ENCODE measurements at regions of chr9 and their contacts with region 1.

Region 1: GRCh38 chr9:38088006-38088925 is 19.2 kb upstream of the SHB start:
- DNase-seq: peak; percentile 84
- H3K4me3 ChIP-seq: no peak overlapping the region
- H3K27ac ChIP-seq: peak overlapping the region in 1 of 2 experiments; percentile 7; a peak in 1 of 4 replicates
- H3K4me1 ChIP-seq: peaks cover 0 to 11% of the 10 kb centered on the region in 2 experiments; a peak in 1 of 4 replicates
- H3K27me3 ChIP-seq: no peaks in the 10 kb centered on the region
- CTCF ChIP-seq: peak; percentile 95
- EP300 ChIP-seq: no peak
- RAD21 ChIP-seq: peak; percentile 84

Region 2: DNA sequence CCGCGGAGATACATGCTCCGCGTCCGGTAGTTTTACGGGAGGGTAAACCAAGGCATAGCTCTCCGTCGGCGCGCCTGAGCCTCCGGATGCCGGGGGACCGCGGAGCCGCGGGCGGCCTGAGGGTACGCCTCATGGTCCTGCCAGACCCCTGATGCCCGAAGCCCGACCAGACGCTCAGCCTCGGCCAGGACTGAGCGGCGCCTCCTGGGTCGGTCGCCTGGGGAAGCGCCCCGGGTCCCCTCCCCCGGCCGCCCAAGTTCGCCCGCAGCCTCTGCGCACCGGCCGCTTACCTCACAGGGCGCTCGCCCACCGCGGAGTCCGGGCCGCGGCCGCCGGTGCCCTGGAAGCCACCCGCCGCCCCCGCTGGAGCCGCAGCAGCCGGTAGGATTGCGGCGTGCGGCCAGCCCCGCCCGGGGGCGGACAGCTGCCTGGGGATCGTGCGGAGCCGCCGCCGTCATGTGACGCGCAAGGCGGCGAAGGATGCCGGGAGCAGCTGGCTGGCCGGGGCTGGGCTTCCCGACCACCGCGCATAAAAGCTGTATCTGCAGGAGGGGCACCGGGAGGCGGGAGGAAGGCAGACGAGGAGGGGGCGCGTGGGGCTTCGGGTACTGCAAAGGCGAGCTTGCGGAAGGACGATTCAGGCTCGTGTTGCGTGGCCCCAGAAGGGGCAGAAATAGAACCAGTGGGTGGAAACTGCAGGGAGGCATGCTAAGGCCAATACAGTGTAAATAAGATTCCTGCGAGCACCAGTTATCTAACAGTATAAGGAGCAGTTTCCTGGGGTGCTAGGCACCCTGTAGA is 512.1 kb before region 1 on chr9 and contains the start of gene FBXO10:
- CTCF ChIA-PET with region 1: no interaction called
- POLR2A ChIA-PET with region 1: no interaction called
- DNase-seq: peak; percentile 91
- H3K4me3 ChIP-seq: peak within 1 kb of the TSS; percentile 72 to 83
- H3K27ac ChIP-seq: peak within 1 kb of the TSS; percentile 28 to 87; a peak in 3 of 4 replicates
- H3K4me1 ChIP-seq: peaks cover 12 to 15% of the 10 kb centered on the region in 2 experiments; a peak in 3 of 4 replicates
- H3K27me3 ChIP-seq: no peaks in the 10 kb centered on the region
- CTCF ChIP-seq: no peak
- EP300 ChIP-seq: no peak
- RAD21 ChIP-seq: no peak
- polyA plus RNA-seq, gene FBXO10: 10.1 and 12.8 TPM in 2 replicates

Region 3: DNA sequence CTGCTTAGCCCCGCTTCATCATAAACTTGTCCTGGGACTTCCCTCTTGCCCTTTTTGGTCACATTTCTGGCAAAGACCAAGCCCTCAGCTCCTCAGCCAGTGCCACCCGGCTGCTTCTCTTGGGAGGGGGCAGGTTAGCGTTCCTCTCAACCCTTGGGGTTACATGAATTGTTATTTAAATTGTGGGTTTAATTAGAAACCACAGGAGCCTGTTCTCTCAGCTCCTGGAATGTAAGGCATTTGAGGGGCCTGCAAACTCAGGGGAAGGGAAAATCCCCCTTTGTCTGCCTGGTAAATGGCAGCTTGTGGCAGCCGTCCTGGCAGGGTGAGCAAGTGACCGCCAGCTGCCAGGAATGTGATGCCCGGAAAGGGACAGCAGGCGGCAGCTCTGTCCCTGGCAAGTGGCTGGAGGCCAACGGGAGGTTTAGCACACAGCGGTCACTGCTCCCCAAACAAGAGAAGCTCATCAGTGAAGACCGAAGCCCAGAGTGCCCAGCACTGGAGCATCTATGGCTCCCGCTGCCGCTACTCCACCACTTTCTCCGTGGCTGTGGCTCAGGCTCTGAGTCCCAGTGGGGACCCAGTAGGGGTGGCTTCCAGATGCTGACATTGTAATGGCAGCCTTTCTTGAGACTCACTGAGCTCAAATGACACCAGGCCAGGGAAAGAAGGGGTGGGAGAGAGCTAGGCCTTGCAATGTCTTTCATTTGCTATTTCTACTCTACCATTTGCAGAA is 70.9 kb before region 1 on chr9:
- CTCF ChIA-PET with region 1: interaction called, 20 read pairs
- POLR2A ChIA-PET with region 1: no interaction called
- DNase-seq: peak; percentile 80
- H3K4me3 ChIP-seq: no peak overlapping the region
- H3K27ac ChIP-seq: peak overlapping the region; percentile 97 to 99
- H3K4me1 ChIP-seq: peaks cover 53 to 61% of the 10 kb centered on the region in 2 experiments
- H3K27me3 ChIP-seq: no peaks in the 10 kb centered on the region
- CTCF ChIP-seq: peak; percentile 45
- EP300 ChIP-seq: peak in 1 of 2 experiments; percentile 43; a peak in 1 of 4 replicates
- RAD21 ChIP-seq: peak; percentile 87

Region 4: DNA sequence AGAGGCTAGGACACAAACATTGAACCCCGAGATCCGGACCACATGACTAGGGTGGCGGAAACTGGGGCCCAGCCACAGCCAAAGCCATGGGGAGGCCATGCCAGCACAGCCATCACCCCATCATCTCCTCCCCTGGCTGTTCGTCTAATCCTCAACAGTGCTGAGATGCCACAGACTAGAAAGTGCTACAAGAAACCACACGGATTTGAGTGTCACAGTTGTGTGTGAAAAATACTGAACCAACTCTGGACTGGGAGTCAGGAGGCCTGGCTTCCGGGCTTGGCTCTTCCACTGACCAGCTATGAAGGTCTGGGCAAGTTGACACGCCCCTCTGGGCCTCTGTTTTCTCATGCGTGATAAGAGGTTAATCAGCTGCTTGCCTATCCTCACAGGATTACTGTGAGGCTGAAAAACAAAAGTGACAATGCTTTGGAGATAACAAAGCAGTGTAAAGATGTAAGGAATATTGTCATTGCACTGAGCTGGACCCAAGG is 19.6 kb after region 1 on chr9:
- CTCF ChIA-PET with region 1: interaction called, 16 read pairs
- POLR2A ChIA-PET with region 1: no interaction called
- DNase-seq: no peak
- H3K4me3 ChIP-seq: no peak overlapping the region
- H3K27ac ChIP-seq: no peak overlapping the region
- H3K4me1 ChIP-seq: peaks cover 0 to 10% of the 10 kb centered on the region in 2 experiments; a peak in 1 of 4 replicates
- H3K27me3 ChIP-seq: peaks cover 10% of the 10 kb centered on the region; the same call in 1 of the 2 replicates
- CTCF ChIP-seq: no peak
- EP300 ChIP-seq: no peak
- RAD21 ChIP-seq: no peak

Region 5: DNA sequence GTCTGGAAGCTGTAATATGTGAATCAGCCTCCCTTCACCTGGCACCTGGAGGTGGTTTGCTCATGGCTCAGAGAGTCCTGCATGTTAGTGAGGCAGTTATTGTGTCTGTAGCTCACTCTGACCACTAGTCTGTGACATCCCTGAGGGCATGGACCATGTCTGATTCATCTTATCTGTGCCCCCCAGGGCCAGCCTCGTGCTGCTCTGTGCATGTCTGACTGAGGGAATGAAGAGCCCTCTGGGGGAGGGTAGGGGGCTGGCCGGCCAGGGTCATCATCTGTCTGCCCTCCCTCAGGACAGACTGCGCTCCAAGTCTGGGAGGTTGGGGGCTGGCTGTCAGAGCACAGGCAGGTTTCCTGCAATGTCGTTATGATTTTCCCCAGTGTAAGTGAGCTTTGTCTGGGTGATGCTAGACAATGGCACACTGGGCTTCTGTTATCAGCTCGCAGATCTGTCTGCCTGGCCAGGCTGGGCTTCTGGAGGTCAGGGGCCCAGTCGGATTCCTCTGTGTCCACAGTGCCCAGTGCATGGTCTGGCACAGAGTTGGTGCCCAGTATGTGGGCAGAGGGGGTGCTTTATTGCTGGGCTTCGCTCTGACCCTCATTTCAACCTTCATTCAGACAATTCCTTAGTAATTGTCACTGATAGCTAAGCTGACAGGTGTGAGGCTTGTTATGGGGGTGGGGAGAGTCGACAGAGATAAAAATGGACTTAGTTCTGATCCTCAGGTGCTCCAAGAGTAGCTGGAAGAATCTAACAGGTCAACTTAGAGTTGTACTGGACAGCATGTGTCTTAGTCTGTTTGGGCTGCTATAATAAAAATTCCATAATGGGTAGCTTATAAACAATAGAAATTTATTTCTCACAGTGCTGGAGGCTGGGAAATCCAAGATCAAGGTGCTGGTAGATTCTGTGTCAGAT is 66.5 kb after region 1 on chr9:
- CTCF ChIA-PET with region 1: interaction called, 43 read pairs
- POLR2A ChIA-PET with region 1: no interaction called
- DNase-seq: peak; percentile 76
- H3K4me3 ChIP-seq: no peak overlapping the region
- H3K27ac ChIP-seq: peak overlapping the region in 1 of 2 experiments; percentile 98; a peak in 2 of 4 replicates
- H3K4me1 ChIP-seq: peaks cover 0 to 34% of the 10 kb centered on the region in 2 experiments; a peak in 2 of 4 replicates
- H3K27me3 ChIP-seq: no peaks in the 10 kb centered on the region
- CTCF ChIP-seq: no peak
- EP300 ChIP-seq: peak in 1 of 2 experiments; percentile 69; a peak in 1 of 4 replicates
- RAD21 ChIP-seq: peak; percentile 38

Region 6: DNA sequence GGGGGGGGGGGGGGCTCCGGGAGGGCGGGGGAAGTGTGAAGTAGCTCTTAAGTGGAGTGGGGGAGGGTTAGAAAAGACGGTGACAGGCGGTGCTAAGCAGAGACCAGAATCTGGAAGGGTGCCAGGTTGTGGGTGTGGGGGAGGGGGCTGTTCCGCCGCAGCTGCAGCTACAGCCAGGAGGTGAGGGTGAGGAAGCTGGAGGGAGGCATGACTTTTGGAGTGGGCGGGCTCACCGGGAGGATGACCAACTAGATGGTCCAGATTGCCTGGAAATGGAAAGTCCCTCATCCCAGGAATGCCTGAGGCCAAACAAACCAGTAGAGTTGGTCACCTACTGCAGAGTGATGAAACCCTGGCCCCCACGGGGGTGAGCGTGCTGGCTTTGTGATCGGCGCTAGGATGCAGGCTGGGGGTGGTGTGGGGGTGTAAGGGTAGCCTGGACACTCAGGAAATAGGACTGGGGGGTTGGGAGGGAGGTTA is 138.8 kb after region 1 on chr9:
- CTCF ChIA-PET with region 1: interaction called, 11 read pairs
- POLR2A ChIA-PET with region 1: no interaction called
- DNase-seq: peak; percentile 75
- H3K4me3 ChIP-seq: peak overlapping the region; percentile 16 to 47; a peak in 3 of 4 replicates
- H3K27ac ChIP-seq: peak overlapping the region in 1 of 2 experiments; percentile 88; a peak in 2 of 4 replicates
- H3K4me1 ChIP-seq: peaks cover 8 to 29% of the 10 kb centered on the region in 2 experiments; a peak in 3 of 4 replicates
- H3K27me3 ChIP-seq: peaks cover 12% of the 10 kb centered on the region; the same call in 1 of the 2 replicates
- CTCF ChIP-seq: no peak
- EP300 ChIP-seq: peak in 1 of 2 experiments; percentile 54; a peak in 2 of 4 replicates
- RAD21 ChIP-seq: peak; percentile 34

Region 7: DNA sequence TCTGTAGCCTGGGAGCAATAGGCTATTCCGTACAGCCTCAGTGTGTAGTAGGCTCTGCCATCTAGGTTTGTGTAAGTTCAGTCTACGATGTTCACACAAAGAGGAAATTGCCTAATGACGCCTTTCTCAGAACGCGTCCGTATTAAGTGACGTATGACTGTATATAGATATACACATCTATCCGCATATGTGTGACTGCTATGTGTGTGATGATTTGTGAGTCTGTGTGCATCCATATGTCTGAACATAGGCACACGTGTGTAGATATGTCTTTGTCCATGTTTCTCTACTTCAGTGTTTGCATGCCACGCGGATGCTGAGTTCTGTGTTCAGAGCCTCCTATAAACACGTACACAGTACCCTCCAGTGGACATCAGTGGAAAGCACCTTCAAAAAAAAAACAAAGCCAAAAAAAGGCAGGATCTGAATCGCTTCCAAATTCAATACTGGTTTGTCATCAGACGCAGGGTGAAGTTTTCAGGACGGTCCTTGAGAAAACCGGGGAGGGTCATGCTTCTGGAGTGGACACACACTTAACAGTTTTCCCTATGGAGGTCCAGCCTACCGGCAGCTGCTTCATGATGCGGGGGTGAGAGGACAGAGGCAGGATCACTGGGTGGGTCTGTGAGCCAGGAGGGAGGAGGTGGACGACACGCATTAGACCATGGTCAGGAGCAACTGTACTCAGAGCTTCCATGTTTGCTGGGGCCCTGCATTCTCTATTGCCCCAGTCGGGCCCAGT is 274.8 kb after region 1 on chr9:
- CTCF ChIA-PET with region 1: interaction called, 46 read pairs
- POLR2A ChIA-PET with region 1: no interaction called
- DNase-seq: peak; percentile 70
- H3K4me3 ChIP-seq: no peak overlapping the region; a peak in 1 of 4 replicates
- H3K27ac ChIP-seq: peak overlapping the region in 1 of 2 experiments; percentile 17; a peak in 1 of 4 replicates
- H3K4me1 ChIP-seq: peaks cover 0 to 27% of the 10 kb centered on the region in 2 experiments; a peak in 2 of 4 replicates
- H3K27me3 ChIP-seq: no peaks in the 10 kb centered on the region
- CTCF ChIP-seq: peak; percentile 76
- EP300 ChIP-seq: no peak
- RAD21 ChIP-seq: peak; percentile 98

Measured in SK-N-SH (cell line).